ENCODE measurements at regions of chr5 and their contacts with region 1.

Region 1: DNA sequence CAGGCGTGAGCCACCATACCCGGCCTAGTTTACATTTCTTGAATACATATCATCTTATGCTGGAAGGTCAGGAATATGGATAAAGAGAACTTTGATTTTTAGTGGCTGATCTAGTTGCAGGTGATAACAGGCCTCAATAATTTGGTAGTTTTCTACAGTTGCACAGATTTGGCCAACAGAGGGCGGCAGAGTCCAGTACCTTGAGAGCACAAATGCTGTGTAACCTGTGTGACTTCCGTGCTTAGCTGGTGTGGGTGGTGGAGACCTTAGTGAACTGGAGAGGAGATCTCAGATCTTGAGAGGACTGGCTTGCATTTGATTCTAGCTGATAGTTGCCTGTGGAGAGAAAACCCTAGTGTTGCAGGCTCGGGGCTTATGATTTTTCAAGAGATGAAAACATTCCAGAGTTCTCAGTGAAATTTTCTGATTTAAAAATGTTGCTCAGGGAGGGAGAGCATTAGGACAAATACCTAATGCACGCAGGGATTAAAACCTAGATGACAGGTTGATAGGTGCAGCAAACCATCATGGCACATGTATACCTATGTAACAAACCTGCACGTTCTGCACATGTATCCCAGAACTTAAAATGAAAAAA is 17.4 kb upstream of the GPR151 start:
- DNase-seq: peak; percentile 61
- H3K4me3 ChIP-seq: no peak overlapping the region
- H3K27ac ChIP-seq: no peak overlapping the region
- H3K4me1 ChIP-seq: no peaks in the 10 kb centered on the region
- H3K27me3 ChIP-seq: peaks cover 0 to 2% of the 10 kb centered on the region in 2 experiments
- CTCF ChIP-seq: peak; percentile 74 to 77
- POLR2A ChIP-seq: no peak

Region 2: DNA sequence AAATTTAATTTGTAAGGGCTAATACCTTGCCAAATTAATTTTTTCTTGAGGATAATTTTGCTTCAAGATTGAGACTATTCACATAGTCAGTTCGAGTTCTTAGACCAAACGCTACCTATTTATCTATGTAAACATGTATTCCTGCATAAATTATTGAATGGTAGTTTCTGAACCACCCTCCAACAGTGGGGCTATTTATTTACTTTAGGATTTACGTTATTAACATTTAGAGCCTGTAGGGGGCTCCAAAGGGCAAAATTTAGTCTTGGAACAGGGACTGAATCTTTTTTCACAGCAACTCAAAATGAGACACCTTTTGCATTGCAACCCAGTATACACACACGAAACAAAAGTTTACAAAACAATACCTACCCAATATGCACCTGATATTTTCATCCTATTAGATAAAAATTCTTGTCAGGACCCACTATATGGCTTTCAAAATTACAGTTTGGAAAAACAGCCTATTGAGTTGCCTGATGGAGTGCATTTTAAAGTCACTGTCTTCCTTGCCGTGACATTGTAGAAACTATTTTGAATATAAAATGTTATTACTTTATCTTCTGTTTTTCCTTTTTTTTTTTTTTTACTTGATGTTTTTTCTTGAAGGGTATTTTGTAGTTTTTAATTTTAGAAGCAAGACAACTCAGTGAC is 241.8 kb before region 1 on chr5:
- CTCF ChIA-PET with region 1: interaction called, 4 read pairs
- POLR2A ChIA-PET with region 1: no interaction called
- dilution Hi-C with region 1: no loop called
- intact Hi-C with region 1: loop called (anchors 5 kb)
- DNase-seq: peak; percentile 47
- H3K4me3 ChIP-seq: no peak overlapping the region
- H3K27ac ChIP-seq: no peak overlapping the region
- H3K4me1 ChIP-seq: no peaks in the 10 kb centered on the region
- H3K27me3 ChIP-seq: no peaks in the 10 kb centered on the region
- CTCF ChIP-seq: peak; percentile 45 to 48
- POLR2A ChIP-seq: no peak

Region 3: DNA sequence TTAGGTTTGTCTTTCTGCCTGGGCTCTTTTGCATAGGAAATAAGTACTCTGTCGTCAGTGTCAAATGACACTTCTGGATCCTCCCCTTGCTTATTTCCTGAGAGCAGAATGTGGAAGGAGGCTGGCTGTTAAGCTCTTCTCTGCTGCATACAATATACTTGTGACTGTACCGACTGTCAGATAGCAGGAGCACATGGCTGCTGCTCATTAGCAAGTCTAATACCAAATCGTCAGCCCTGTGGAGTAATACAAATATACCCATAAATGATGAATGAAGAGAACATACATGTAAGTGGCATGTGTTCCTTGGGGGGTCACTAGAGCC is 17.2 kb before region 1 on chr5 and contains the start of gene GPR151:
- CTCF ChIA-PET with region 1: interaction called, 15 read pairs
- POLR2A ChIA-PET with region 1: no interaction called
- dilution Hi-C with region 1: no loop called
- intact Hi-C with region 1: no loop called
- DNase-seq: no peak
- H3K4me3 ChIP-seq: no peak within 1 kb of the TSS
- H3K27ac ChIP-seq: no peak within 1 kb of the TSS
- H3K4me1 ChIP-seq: no peaks in the 10 kb centered on the region
- H3K27me3 ChIP-seq: peaks cover 0 to 2% of the 10 kb centered on the region in 2 experiments
- CTCF ChIP-seq: no peak
- POLR2A ChIP-seq: no peak
- total RNA-seq, gene GPR151: not detected in 2 replicates